HAP-1 (cell line): ENCODE measurements at regions of chr17 and their contacts with region 1.

Region 1: DNA sequence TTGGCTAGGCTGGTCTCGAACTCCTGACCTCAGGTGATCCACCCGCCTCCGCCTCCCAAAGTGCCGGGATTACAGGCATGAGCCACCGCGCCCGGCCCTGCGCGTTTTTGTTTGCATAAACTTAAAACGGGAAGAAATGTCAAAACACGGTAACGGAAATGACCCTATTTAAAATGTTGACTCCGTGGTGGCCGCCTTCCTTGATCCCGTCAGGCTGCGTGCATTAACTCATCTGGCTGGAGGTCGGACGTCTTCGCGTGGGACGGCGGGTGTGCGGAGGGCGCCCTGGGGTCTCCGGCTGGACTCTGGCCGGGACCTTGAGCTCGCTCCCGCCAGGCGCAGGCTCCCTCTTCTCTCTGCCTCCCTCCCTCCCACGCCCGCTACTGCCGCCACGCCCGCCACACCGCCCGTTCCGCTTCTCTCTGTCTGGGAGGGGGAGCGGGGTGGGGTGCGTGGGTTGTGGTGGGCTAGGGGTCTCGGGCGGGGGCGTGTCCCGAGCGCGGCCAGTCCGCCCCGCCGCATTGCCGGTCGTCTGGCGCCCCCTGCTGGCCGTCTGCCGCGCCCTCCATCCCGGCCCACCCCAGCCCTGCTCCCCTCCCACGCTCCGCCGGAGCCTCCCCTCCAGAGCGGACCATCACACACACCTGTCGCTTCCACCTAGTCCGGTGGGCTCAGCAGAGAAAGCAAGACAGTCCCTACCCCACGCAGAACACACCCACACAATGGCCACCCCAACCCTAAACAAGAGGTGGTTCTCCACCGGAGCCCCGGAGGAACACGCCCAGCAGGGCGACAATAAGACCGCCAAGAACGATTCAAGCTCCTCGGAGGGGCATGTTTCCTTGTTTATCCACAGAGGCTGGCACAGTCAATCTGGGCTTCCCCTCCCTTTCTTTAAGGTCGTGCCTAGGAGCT is 1.2 kb upstream of the CCDC42 start:
- DNase-seq: peak; percentile 39 to 87
- H3K4me3 ChIP-seq: peak overlapping the region; percentile 43
- H3K4me1 ChIP-seq: no peaks in the 10 kb centered on the region; the same call in 1 of the 2 replicates
- H3K27me3 ChIP-seq: peaks cover 9% of the 10 kb centered on the region; the same call in 1 of the 2 replicates

Region 2: DNA sequence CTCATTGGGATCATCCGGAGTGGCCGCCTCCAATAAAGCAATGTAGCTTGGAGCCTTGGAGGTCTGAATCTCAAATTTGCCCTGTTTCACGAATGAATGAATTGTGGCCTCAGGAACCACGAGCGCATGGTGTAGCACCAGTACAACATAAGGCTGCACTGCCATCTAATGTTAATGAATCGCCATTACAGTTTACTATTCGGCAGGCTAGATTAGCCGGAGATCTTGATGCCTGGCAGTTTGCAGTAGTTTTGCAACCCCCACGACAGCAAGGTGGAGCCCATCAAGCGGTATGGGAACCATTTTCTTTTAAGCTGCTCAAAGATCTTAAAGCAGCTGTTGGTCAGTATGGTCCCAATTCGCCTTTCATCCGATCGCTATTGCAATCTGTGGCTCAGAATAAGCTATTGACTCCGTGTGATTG is 688.1 kb before region 1 on chr17:
- in situ Hi-C with region 1: loop called (anchors 25 kb)
- DNase-seq: peak; percentile 77 to 85
- H3K4me3 ChIP-seq: no peak overlapping the region
- H3K4me1 ChIP-seq: peaks cover 10% of the 10 kb centered on the region
- H3K27me3 ChIP-seq: peaks cover 10% of the 10 kb centered on the region; the same call in 1 of the 2 replicates

Region 3: GRCh38 chr17:8383143-8383822 is 362.6 kb before region 1 on chr17 and contains the start of gene RPL26:
- in situ Hi-C with region 1: loop called (anchors 10 kb)
- DNase-seq: peak; percentile 96 to 97
- H3K4me3 ChIP-seq: peak within 1 kb of the TSS; percentile 85
- H3K4me1 ChIP-seq: peaks cover 22% of the 10 kb centered on the region
- H3K27me3 ChIP-seq: no peaks in the 10 kb centered on the region

Region 4: GRCh38 chr17:8409966-8410864 is 335.6 kb before region 1 on chr17:
- in situ Hi-C with region 1: loop called (anchors 10 kb)
- DNase-seq: peak; percentile 91 to 94
- H3K4me3 ChIP-seq: no peak overlapping the region
- H3K4me1 ChIP-seq: peaks cover 4% of the 10 kb centered on the region; the same call in 1 of the 2 replicates
- H3K27me3 ChIP-seq: peaks cover 4% of the 10 kb centered on the region; the same call in 1 of the 2 replicates

Region 5: DNA sequence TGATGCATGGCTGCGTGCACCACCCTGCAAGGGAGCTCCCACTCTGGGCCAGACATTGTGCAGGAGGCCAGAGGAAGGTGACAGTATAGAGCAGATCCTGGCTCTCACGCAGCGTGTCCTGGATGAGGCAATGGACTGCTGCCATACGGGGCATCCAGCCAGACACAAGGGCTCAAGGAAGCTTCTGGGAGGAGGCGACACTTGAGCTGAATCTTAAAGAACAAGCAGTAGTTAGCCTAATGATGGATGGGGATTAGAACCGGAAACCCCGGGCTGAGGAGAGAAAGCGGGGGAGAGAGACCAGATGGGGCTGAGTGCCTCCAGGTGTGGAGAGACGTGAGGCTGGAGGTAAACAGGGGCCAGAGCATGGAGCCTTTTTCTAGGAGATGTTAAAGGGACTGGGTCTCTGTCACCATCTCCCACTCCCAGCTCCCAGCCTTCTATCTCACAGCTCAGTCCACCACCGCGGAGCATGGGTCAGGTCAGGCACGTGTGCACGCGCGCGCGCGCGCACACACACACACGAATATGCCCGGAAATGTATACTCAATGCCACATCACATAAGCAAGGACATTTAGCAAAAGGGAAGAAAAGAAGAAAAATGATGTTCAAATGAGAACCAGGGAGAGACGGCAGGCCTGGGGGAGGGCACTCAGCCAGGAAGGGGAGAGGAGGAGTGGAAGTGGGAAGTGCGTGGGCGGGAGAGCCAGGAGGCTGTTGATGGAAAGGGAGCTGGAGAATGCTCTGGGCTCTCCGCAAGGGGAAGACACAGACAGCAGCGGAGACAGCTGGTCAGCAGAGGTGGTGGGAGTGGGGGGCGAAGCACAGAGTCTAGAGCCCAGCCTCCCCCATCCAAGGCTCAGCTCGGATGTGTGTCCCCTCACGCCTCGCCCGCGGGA is 47.4 kb before region 1 on chr17:
- in situ Hi-C with region 1: no loop called
- DNase-seq: no peak
- H3K4me3 ChIP-seq: no peak overlapping the region
- H3K4me1 ChIP-seq: peaks cover 10% of the 10 kb centered on the region; the same call in 1 of the 2 replicates
- H3K27me3 ChIP-seq: no peaks in the 10 kb centered on the region